HepG2 (cell line): ENCODE measurements at regions of chr10 and their contacts with region 1.

Region 1: DNA sequence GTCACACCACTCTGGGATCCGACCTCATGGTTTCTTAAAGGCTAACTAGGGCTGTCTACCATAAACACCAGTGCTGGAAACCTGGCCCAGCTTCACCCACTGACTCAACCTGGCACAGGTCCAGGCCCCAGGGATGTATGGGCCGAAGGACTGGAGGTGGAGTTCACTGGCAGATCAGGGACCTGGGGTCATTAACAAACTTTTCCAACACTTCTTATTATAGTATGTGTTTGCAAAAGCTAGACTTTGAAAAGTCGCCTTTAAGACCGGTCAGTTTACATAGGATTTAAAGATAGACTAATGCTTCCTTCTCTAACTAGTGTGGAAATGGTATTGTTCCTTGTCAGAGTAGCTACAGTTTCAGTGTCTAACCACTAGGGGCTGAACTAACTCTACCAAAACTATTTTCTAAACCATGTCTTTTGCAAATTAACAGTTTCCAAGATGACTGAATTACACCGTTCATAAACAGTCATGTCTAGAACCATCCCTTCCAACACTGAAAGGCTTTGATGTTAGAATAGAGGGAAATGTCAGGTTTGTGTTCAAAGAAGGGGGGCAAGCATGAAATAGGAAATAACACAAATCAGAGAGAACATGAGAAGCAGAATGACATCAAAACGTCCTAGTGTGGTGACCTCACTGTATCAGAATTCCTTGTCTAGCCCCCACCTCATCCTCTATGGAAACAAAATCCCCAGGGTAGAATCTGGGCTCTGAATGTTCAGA is 29.7 kb downstream of the STN1 start:
- DNase-seq: peak; percentile 41
- ATAC-seq: peak; percentile 71
- H3K4me3 ChIP-seq: no peak overlapping the region
- H3K27ac ChIP-seq: no peak overlapping the region
- H3K4me1 ChIP-seq: peaks cover 30% of the 10 kb centered on the region
- H3K27me3 ChIP-seq: no peaks in the 10 kb centered on the region
- CTCF ChIP-seq: peak; percentile 81
- EP300 ChIP-seq: no peak
- POLR2A ChIP-seq: no peak
- RAD21 ChIP-seq: peak; percentile 72

Region 2: DNA sequence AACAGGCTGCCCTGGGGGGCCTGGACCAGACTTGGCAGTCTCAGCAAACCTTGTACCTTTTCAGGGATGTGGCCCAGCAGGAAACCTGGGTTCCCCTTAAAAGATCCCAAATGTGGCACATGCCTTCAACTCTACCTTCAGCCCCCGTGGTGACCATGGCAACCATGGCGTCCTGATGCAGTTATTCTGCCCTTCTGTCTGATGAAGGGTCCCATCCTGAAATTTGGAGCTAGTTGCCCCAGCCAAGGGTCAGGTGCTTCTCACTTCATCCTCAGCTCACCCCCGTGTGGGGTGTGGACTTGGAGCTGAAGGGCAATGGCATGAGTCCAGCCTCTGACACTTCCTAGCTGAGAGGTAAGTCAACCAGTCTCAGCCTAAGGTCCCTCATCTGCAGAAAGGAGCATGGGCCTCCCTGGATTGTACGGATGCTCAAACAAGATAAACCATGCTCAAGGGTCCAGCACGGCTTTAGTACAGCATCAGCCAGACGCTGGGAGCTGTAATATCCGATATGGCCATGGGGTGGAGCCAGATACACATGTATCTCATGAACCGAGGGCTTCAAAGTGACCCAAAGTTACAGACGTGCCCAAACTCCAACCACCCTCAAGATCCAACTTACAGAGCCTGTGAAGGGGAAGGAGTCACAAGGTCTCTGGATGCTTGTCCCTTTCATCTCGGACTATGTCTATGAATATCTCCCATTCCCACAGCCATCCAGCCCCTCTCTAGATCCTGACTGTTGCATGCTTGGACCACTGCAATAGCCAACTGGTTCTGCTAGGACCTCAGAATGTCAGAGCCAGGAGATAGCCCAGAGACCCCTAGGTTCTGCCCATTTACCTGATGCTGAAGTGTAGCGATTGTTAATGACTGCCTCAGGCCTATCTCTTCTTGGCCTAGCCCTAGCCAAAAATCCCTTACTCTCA is 175.4 kb before region 1 on chr10:
- CTCF ChIA-PET with region 1: interaction called, 20 read pairs
- POLR2A ChIA-PET with region 1: no interaction called
- in situ Hi-C with region 1: no loop called
- intact Hi-C with region 1: loop called (anchors 1 kb)
- DNase-seq: peak; percentile 57
- ATAC-seq: peak; percentile 59
- H3K4me3 ChIP-seq: no peak overlapping the region
- H3K27ac ChIP-seq: peak overlapping the region; percentile 11
- H3K4me1 ChIP-seq: peaks cover 58% of the 10 kb centered on the region
- H3K27me3 ChIP-seq: no peaks in the 10 kb centered on the region
- CTCF ChIP-seq: peak; percentile 90
- EP300 ChIP-seq: no peak
- POLR2A ChIP-seq: no peak
- RAD21 ChIP-seq: peak; percentile 82

Region 3: GRCh38 chr10:103947799-103948516 is 59.7 kb after region 1 on chr10:
- CTCF ChIA-PET with region 1: no interaction called
- POLR2A ChIA-PET with region 1: no interaction called
- in situ Hi-C with region 1: no loop called
- intact Hi-C with region 1: no loop called
- DNase-seq: no peak
- ATAC-seq: no peak
- H3K4me3 ChIP-seq: no peak overlapping the region
- H3K27ac ChIP-seq: no peak overlapping the region
- H3K4me1 ChIP-seq: no peaks in the 10 kb centered on the region
- H3K27me3 ChIP-seq: peaks cover 1 to 14% of the 10 kb centered on the region in 2 experiments; a peak in 1 of 5 replicates
- CTCF ChIP-seq: no peak
- EP300 ChIP-seq: no peak
- POLR2A ChIP-seq: no peak
- RAD21 ChIP-seq: no peak

Region 4: DNA sequence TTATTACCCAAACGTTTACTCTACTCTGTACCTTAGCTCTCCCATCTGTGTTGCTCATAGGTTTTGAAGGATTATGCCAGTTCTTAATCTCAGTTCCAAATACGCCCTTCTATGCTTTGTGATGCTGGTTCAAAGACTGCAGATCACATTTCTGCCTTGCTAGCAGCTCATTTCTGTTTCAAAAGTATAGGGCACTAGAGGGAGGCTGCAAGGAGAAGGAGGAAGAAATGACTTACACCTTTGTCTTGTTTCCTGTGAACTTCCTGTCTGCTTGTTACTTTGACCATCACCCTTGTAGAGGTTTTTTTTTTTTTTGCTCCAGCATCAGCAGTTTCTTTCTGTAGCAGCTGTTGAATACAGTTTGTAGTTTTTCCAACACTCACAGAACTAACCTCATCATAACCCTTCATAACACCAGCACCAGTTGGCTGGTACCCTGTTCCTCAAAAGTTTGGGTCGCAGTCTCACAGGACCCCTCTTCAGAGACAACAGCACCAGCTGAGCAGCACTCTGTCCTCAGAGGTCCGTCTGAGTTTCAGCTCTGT is 95.2 kb after region 1 on chr10:
- CTCF ChIA-PET with region 1: no interaction called
- POLR2A ChIA-PET with region 1: no interaction called
- in situ Hi-C with region 1: no loop called
- intact Hi-C with region 1: loop called (anchors 5 kb)
- DNase-seq: no peak
- ATAC-seq: peak; percentile 50; the same call in 1 of the 3 replicates
- H3K4me3 ChIP-seq: no peak overlapping the region
- H3K27ac ChIP-seq: peak overlapping the region; percentile 4
- H3K4me1 ChIP-seq: peaks cover 13% of the 10 kb centered on the region
- H3K27me3 ChIP-seq: no peaks in the 10 kb centered on the region
- CTCF ChIP-seq: no peak
- EP300 ChIP-seq: no peak
- POLR2A ChIP-seq: no peak
- RAD21 ChIP-seq: no peak

Region 5: DNA sequence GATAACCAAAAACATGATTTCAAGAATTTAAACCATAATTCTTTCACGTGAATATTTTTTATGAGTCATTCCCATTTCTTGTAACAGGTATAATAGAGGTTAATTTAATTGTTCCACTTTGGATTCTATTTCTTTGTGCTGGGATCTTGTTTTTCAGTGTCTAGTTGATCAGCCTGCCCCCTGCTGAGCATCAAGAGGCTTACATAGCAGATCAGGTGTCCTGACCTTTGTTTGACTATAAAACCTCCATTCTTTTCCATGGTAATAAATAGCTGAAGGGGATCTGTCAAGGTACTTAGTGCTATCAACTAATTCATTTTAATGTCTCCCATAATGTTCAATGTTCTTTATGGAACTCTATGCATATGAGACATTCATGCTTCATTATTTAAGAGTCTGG is 192.5 kb after region 1 on chr10:
- CTCF ChIA-PET with region 1: no interaction called
- POLR2A ChIA-PET with region 1: no interaction called
- in situ Hi-C with region 1: no loop called
- intact Hi-C with region 1: loop called (anchors 1 kb)
- DNase-seq: peak; percentile 28
- ATAC-seq: peak; percentile 70
- H3K4me3 ChIP-seq: no peak overlapping the region
- H3K27ac ChIP-seq: no peak overlapping the region
- H3K4me1 ChIP-seq: no peaks in the 10 kb centered on the region
- H3K27me3 ChIP-seq: peaks cover 0 to 23% of the 10 kb centered on the region in 2 experiments; a peak in 2 of 5 replicates
- CTCF ChIP-seq: peak; percentile 49
- EP300 ChIP-seq: no peak
- POLR2A ChIP-seq: no peak
- RAD21 ChIP-seq: no peak

Region 6: DNA sequence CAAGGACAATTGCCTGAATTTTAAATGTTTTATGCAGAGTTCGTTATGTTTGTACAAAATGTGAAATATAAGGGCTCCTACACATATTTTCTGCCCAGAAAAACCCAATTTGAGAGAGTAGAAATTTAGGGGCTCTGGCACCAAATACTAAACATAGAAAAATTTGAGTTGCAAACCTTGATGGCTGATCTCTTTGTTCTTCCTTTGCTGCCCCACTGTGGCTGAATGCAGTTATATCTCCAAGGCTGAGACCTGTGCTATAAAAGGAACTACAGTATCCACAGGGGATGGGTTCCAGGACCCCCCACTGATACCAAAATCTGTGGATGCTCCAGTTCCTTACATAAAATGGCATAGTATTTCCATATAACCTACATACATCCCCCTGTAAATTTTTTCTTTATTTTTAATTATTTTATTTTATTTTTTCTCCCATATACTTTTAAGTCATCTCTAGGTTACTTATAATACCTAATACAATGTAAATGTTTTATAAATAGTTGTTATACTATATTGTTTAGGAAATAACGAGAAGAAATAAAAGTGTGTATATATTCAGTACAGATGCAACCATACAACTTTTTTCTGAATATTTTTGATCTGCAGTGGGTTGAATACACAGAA is 321.4 kb after region 1 on chr10:
- CTCF ChIA-PET with region 1: no interaction called
- POLR2A ChIA-PET with region 1: no interaction called
- in situ Hi-C with region 1: no loop called
- intact Hi-C with region 1: loop called (anchors 1 kb)
- DNase-seq: peak; percentile 27
- ATAC-seq: peak; percentile 77
- H3K4me3 ChIP-seq: no peak overlapping the region
- H3K27ac ChIP-seq: no peak overlapping the region
- H3K4me1 ChIP-seq: no peaks in the 10 kb centered on the region
- H3K27me3 ChIP-seq: no peaks in the 10 kb centered on the region
- CTCF ChIP-seq: peak; percentile 66
- EP300 ChIP-seq: no peak
- POLR2A ChIP-seq: no peak
- RAD21 ChIP-seq: 0 out of 2 replicates have a peak, but pooled peaks have one; percentile 36